ENCODE measurements at regions of chr7 and their contacts with region 1.

Region 1: GRCh38 chr7:55365675-55366460 is 731 bp downstream of the LANCL2 start:
- DNase-seq: peak; percentile 94
- H3K4me3 ChIP-seq: peak overlapping the region; percentile 41 to 79 (median 69)
- H3K27ac ChIP-seq: peak overlapping the region; percentile 88
- H3K4me1 ChIP-seq: peaks cover 24% of the 10 kb centered on the region
- H3K27me3 ChIP-seq: peaks cover 0 to 2% of the 10 kb centered on the region in 2 experiments
- CTCF ChIP-seq: peak; percentile 12 to 30
- POLR2A ChIP-seq: peak; percentile 70

Region 2: GRCh38 chr7:55192718-55193117 is 173.2 kb before region 1 on chr7:
- CTCF ChIA-PET with region 1: no interaction called
- POLR2A ChIA-PET with region 1: no interaction called
- dilution Hi-C with region 1: no loop called
- intact Hi-C with region 1: loop called (anchors 10 kb)
- DNase-seq: peak; percentile 90
- H3K4me3 ChIP-seq: no peak overlapping the region
- H3K27ac ChIP-seq: peak overlapping the region; percentile 80
- H3K4me1 ChIP-seq: peaks cover 42% of the 10 kb centered on the region
- H3K27me3 ChIP-seq: no peaks in the 10 kb centered on the region
- CTCF ChIP-seq: no peak
- POLR2A ChIP-seq: peak; percentile 45

Region 3: DNA sequence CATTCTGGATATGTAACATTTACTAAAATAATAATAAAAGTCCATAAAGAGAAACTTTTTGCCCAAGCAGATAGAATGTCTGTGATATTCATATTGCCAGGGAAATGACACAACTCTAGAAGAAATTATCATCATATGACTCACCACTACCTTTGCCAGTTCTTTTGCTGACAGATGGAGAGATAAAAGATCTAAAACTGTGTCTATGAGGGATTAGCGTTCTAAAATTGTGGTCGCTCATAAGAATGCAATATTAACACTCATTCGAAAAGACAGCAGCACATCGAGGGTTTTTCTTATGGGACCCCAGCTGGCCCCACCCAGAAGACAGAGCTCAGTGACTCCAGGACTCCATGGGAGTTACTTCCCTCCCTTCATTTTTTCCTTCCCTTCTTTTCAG is 17.4 kb before region 1 on chr7:
- CTCF ChIA-PET with region 1: interaction called, 6 read pairs
- POLR2A ChIA-PET with region 1: no interaction called
- dilution Hi-C with region 1: no loop called
- intact Hi-C with region 1: loop called (anchors 1 kb)
- DNase-seq: peak; percentile 39
- H3K4me3 ChIP-seq: peak overlapping the region in 1 of 3 experiments; percentile 36
- H3K27ac ChIP-seq: peak overlapping the region; percentile 51
- H3K4me1 ChIP-seq: peaks cover 20% of the 10 kb centered on the region
- H3K27me3 ChIP-seq: no peaks in the 10 kb centered on the region
- CTCF ChIP-seq: no peak
- POLR2A ChIP-seq: no peak

Region 4: DNA sequence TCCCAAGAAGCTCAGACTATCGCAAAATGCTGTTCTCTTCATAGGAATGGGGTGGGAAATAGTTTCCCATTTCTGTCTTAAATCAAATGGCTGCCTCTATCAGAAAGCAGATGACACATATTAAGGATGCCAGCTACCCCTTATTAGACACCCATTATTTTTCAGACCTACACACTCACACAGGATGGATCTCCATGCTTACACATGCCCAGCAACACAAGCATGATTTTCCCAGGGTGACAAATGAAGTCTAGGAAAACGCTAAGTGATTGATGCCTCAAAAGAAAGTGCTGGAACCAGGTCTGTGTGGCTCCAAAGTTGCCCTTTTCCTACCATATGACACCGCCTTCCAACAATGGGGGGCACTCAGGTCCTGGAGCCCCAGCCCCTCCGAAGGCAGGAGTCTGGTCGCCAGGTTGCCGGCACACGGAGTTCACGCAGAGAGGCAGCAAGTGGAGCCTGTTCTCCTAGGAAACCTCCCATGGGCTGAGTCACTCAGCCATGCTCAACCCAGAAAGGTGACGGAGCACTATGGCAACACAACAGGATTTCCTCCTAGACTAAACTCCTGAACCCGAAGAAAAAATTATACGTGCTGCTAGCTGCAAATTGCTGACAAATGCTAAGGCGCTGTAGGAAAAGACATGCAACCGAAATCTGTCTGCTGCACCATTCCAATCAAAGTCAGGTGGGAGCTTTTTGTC is 186.6 kb after region 1 on chr7:
- CTCF ChIA-PET with region 1: no interaction called
- POLR2A ChIA-PET with region 1: no interaction called
- dilution Hi-C with region 1: no loop called
- intact Hi-C with region 1: loop called (anchors 5 kb)
- DNase-seq: peak; percentile 96
- H3K4me3 ChIP-seq: peak overlapping the region in 2 of 3 experiments; percentile 22 to 43
- H3K27ac ChIP-seq: peak overlapping the region; percentile 82
- H3K4me1 ChIP-seq: peaks cover 49% of the 10 kb centered on the region
- H3K27me3 ChIP-seq: no peaks in the 10 kb centered on the region
- CTCF ChIP-seq: no peak
- POLR2A ChIP-seq: no peak

Region 5: GRCh38 chr7:55641273-55641691 is 275.4 kb after region 1 on chr7:
- CTCF ChIA-PET with region 1: no interaction called
- POLR2A ChIA-PET with region 1: no interaction called
- dilution Hi-C with region 1: no loop called
- intact Hi-C with region 1: no loop called
- DNase-seq: peak; percentile 83
- H3K4me3 ChIP-seq: no peak overlapping the region
- H3K27ac ChIP-seq: no peak overlapping the region
- H3K4me1 ChIP-seq: peaks cover 6% of the 10 kb centered on the region
- H3K27me3 ChIP-seq: peaks cover 0 to 3% of the 10 kb centered on the region in 2 experiments
- CTCF ChIP-seq: peak; percentile 53 to 63
- POLR2A ChIP-seq: no peak

Region 6: DNA sequence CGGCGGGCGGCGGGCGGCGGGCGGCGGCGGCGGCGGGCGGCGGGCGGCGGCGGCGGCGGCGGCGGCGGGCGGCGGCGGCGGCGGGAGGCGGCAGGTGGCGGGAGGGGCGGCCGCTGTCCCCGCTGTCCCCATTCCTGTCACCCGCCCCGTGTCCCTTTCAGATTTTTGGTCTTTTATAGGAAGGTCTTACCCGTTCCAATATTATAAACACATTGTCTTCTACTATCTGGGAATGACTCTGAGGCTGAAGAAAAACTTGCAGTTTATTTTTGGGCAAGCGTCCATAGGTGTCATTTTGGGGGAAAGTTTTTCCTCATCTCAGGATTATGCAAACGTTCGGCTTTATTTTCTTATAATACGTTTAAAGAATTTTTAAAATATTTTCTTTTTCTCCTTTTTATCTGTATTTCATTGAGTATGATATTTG is 522.0 kb after region 1 on chr7:
- CTCF ChIA-PET with region 1: no interaction called
- POLR2A ChIA-PET with region 1: no interaction called
- dilution Hi-C with region 1: no loop called
- intact Hi-C with region 1: loop called (anchors 2 kb)
- DNase-seq: no peak
- H3K4me3 ChIP-seq: peak overlapping the region; percentile 59 to 94 (median 90)
- H3K27ac ChIP-seq: peak overlapping the region; percentile 60
- H3K4me1 ChIP-seq: peaks cover 2% of the 10 kb centered on the region
- H3K27me3 ChIP-seq: no peaks in the 10 kb centered on the region
- CTCF ChIP-seq: no peak
- POLR2A ChIP-seq: no peak

Region 7: DNA sequence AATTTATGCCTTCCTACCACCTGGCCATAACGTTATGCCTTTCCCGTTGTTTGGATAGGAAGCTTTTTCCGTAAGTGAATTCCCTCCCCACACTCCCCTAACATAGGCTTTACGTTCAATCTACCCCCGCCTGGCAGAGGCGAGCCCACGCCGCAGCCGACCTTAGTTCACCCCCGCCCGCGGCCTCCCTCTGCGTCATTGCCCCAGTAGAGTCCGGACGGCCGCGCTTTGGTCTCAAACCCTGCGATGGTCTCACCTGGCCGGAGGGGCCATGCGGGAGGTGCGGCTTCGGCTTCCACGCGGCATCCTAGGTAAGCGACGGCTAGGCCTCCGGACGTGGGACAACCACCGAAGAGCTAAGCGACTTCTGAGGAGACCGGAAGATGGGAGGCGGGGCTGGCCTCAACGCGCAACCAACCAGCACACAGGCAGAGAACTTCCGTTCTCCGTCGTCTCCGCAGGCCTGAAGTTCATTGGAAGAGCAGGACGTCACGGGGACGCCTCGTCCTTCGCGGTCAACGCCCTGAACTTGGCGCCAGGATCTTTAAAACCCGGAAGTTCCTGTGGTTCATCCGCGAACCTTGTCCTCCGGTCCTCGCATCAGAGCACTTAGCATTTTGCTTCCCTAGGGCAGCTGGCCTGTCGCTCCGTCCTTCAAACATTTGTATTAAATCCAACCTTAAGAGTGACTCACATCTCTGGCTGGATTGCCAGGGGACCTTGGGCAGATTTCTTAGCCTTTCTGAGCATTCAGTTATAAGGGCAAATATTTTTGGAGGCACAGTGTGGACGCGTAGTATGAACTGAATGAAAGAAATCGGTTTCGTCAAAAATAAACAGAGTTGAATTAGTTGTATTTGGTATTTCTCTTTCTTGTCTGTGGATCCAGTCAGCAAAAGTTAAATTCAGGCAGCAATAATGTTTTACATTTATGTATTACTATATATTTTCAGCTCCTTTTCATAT is 740.5 kb after region 1 on chr7 and contains the start of gene CHCHD2:
- CTCF ChIA-PET with region 1: no interaction called
- POLR2A ChIA-PET with region 1: no interaction called
- dilution Hi-C with region 1: no loop called
- intact Hi-C with region 1: loop called (anchors 10 kb)
- DNase-seq: peak; percentile 98
- H3K4me3 ChIP-seq: peak within 1 kb of the TSS; percentile 54 to 87 (median 86)
- H3K27ac ChIP-seq: peak within 1 kb of the TSS; percentile 77
- H3K4me1 ChIP-seq: peaks cover 4% of the 10 kb centered on the region
- H3K27me3 ChIP-seq: no peaks in the 10 kb centered on the region
- CTCF ChIP-seq: no peak
- POLR2A ChIP-seq: peak; percentile 70
- total RNA-seq, gene CHCHD2: 368 and 378 TPM in 2 replicates